ENCODE measurements at regions of chr2 and their contacts with region 1.

Region 1: GRCh38 chr2:177263451-177264208 is 897 bp downstream of the NFE2L2 start:
- DNase-seq: peak; percentile 98 to 99 (median 99)
- ATAC-seq: peak; percentile 70 to 85 (median 79)
- H3K4me3 ChIP-seq: peak overlapping the region; percentile 72 to 90 (median 82)
- H3K27ac ChIP-seq: peak overlapping the region; percentile 98 to 100 (median 100)
- H3K4me1 ChIP-seq: peaks cover 0 to 43% (median 14%) of the 10 kb centered on the region in 4 donors
- H3K27me3 ChIP-seq: no peaks in the 10 kb centered on the region
- CTCF ChIP-seq: peak; percentile 84 to 93 (median 88)
- POLR2A ChIP-seq: peak; percentile 86

Region 2: DNA sequence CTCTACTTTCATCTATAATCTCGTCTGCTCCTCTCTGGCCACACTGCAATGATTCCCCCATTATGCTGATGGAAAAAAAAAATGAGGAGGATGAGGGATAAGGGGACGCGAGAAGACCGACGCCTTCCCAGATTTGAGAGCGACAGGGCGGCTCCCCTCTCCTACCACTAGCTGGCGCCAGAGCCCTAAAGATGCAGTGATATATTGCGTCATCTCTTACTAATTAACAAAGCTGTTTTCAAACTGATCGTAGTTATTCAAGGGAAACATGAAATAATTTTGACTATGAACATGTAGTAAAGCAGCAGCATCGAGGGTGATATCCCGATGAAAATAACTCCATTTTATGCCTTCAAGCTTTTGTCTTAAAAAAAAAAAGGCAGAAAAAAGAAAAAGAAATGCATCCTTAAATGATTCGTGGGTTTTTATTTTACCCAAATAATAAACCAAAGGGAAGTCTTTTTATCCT is 99.0 kb before region 1 on chr2:
- intact Hi-C with region 1: loop called in 1 of 2 experiments (anchors 10 kb)
- DNase-seq: peak; percentile 80 to 85 (median 80)
- ATAC-seq: peak; percentile 85 to 92 (median 90)
- H3K4me3 ChIP-seq: peak overlapping the region; percentile 14 to 43 (median 42)
- H3K27ac ChIP-seq: peak overlapping the region; percentile 87 to 91 (median 88)
- H3K4me1 ChIP-seq: peaks cover 0 to 16% (median 4%) of the 10 kb centered on the region in 4 donors
- H3K27me3 ChIP-seq: no peaks in the 10 kb centered on the region
- CTCF ChIP-seq: peak in 3 of 4 donors; percentile 99 to 100 (median 99)
- POLR2A ChIP-seq: no peak